ENCODE measurements at regions of chr1 and their contacts with region 1.

Region 1: DNA sequence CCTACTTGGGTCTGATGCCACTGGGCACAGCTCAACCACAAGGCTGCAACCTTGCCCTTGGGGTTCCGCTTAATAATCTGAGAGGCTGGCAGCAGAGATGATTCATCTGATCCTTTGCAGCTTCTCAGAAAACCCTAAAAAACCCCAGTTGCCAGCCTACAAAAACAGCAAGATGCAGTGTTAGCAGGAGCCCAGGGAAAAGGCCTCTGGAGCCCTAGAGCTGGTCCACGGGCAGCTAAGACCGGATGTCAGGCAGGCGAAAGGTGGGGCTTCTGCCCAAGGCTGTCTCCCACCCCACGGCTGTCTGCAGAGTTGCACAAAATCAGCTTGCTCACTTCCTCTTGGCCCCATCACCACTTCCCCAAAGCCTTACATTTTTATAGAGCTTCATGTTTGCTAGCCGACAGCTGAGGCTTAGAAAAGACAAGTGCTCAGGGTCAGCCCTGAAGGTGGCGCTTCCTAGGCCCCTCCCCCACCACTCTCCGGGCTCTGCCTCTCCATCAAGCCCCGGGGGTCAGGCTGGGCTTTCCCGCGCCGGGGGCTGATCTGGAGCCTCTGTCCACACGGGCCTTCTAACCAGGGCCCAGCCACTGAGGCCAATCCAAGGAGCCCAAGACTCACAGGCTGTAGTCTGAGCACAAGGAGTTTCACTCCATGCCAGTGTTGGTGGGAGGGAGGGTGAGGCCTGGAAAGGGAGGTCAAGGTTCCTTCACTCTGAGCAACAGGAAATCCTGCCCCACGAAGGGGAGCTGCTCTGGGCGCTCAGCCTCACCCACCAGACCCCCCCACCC is 4.2 kb upstream of the ADORA3 start:
- DNase-seq: peak; percentile 52
- H3K4me3 Mint-ChIP-seq: peak overlapping the region; percentile 72
- H3K27ac Mint-ChIP-seq: peak overlapping the region; percentile 83
- H3K4me1 Mint-ChIP-seq: peaks cover 58% of the 10 kb centered on the region
- H3K27me3 Mint-ChIP-seq: no peaks in the 10 kb centered on the region

Region 2: DNA sequence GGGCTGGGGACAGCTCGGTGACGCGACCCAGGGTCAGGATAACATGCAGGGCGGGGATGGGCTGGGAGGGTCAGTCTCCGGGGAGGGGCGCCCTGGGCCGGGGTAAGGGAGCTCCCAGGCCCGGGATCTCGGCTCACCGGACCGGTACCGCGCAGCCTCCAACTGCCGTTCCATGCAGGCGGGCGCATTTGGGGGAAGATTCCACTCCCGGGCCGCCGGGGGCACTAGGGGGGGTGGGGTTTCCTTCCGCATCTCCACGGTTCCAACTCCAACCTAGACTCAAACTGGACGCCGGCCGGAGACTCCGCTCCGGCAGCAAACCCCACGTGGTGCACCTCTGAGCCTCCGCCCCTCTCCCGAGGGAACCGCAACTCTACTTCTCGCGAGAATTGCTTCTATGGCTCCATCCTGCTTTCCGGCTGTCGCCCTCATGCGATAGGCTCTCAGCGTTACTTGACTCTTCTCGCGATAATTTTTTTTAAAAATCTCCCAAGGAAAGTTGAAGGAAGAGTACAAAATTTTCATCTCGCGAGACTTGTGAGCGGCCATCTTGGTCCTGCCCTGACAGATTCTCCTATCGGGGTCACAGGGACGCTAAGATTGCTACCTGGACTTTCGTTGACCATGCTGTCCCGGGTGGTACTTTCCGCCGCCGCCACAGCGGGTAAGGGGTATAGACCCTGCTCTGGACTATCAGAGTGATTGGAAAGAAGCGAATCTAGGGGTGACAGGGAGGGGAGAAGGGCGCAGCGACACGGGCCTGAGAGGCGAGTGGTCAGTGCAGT is 58.5 kb before region 1 on chr1 and contains the starts of genes ATP5PB and WDR77:
- intact Hi-C with region 1: loop called (anchors 1 kb)
- DNase-seq: peak; percentile 91
- H3K4me3 Mint-ChIP-seq: peak within 1 kb of the TSS; percentile 100
- H3K27ac Mint-ChIP-seq: peak within 1 kb of the TSS; percentile 96
- H3K4me1 Mint-ChIP-seq: peaks cover 74% of the 10 kb centered on the region
- H3K27me3 Mint-ChIP-seq: no peaks in the 10 kb centered on the region
- total RNA-seq, gene ATP5PB: 280 and 282 TPM in 2 replicates
- total RNA-seq, gene WDR77: 61.3 and 62.5 TPM in 2 replicates

Region 3: GRCh38 chr1:111592389-111593361 is 85.1 kb after region 1 on chr1:
- intact Hi-C with region 1: loop called (anchors 1 kb)
- DNase-seq: peak; percentile 84
- H3K4me3 Mint-ChIP-seq: peak overlapping the region; percentile 25
- H3K27ac Mint-ChIP-seq: peak overlapping the region; percentile 91
- H3K4me1 Mint-ChIP-seq: peaks cover 76% of the 10 kb centered on the region
- H3K27me3 Mint-ChIP-seq: peaks cover 2% of the 10 kb centered on the region

Region 4: DNA sequence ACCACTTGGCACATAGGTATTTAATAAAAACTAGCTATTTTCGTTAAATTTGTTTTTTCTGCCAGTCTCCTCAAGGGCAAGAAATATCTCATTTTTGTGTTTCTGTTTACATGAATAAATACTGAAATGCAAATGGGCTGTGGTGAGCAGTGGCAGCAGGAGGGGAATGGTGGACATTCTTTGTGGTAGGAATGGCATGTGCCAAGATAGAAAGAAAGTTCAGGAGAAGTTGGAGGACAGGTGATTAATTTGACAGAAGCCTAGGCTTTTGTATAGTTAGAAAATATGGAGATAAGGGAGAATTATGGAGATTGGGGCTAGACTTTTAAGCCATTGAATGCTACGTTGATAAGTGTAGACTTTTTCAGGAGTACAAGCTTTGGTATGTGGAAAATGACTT is 120.5 kb after region 1 on chr1:
- intact Hi-C with region 1: loop called (anchors 1 kb)
- DNase-seq: no peak
- H3K4me3 Mint-ChIP-seq: peak overlapping the region; percentile 63
- H3K27ac Mint-ChIP-seq: peak overlapping the region; percentile 75
- H3K4me1 Mint-ChIP-seq: peaks cover 90% of the 10 kb centered on the region
- H3K27me3 Mint-ChIP-seq: no peaks in the 10 kb centered on the region

Region 5: DNA sequence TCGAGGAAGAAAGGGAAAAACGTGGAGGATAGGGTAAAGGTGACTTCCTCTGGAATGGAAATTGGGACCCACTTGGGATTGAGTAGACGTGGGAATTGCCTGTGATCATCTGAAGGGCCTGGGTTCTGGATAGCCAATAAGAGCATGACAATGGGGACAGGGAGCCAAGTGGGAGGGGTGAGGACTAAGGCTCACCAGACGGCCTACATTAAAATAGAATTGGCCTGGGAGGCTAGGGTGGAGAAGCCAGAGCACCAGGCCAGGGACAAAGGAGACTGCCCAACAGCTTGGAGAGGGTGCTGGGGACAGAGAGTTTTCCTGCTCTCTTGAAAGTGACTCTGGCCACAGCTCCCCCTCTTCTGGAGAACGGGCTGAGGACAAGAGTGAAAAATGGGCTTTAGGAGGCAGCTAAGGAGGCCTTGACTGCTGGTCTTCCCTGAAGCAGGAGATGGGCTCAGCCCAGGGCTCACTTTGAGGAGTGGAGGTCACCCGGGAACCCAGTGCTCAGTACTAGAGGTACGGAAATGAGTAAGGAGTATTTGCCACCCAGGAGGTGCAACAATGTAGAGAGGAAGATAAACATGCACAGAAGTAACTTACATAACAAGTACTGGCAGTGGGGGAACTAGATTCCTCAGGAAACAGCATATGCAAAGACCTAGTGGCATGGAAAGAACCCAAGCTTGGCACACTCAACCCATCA is 212.8 kb after region 1 on chr1:
- intact Hi-C with region 1: loop called (anchors 1 kb)
- DNase-seq: no peak
- H3K4me3 Mint-ChIP-seq: no peak overlapping the region
- H3K27ac Mint-ChIP-seq: peak overlapping the region; percentile 32
- H3K4me1 Mint-ChIP-seq: peaks cover 7% of the 10 kb centered on the region
- H3K27me3 Mint-ChIP-seq: no peaks in the 10 kb centered on the region

Region 6: DNA sequence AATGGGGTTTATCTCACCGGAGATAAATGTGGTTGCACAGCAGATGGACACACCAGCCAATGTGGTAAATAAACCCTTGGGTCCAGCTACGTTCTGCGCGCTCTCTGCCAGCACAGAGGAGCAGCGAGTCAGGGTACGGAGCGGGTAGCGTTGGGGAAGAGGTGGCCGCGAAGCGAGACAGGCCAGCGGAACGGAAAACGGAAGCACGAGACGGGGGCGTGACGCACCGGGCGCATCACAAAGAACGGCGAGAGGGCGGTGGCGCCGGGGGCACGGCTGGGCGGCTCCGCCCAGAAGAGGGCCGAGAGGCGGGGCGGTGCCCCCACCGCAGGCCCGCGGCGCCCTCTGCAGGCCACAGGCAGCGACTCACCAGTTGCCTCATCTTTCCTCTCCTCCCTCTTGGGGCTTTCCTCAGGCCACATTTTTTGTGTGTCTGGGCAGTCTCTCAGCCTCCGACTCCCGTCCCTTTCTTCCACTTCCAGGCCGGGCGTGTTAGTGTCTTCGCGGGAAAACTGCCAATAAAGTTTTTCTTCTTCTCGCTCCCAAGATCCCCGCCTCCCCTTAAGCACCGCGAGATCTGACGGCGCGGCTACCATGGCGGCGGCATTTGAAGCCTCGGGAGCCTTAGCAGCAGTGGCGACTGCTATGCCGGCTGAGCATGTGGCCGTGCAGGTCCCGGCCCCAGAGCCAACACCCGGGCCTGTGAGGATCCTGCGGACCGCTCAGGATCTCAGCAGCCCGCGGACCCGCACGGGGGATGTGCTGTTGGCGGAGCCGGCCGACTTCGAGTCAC is 247.9 kb after region 1 on chr1 and contains the start of gene DDX20:
- intact Hi-C with region 1: loop called (anchors 1 kb)
- DNase-seq: peak; percentile 92
- H3K4me3 Mint-ChIP-seq: peak within 1 kb of the TSS; percentile 83
- H3K27ac Mint-ChIP-seq: peak within 1 kb of the TSS; percentile 97
- H3K4me1 Mint-ChIP-seq: peaks cover 35% of the 10 kb centered on the region
- H3K27me3 Mint-ChIP-seq: peaks cover 12% of the 10 kb centered on the region
- total RNA-seq, gene DDX20: 21.5 and 25.2 TPM in 2 replicates